Gastrocnemius medialis (tissue), 4 donors: ENCODE measurements at regions of chr1 and their contacts with region 1.

Region 1: GRCh38 chr1:99707535-99708142 is 58.8 kb downstream of the FRRS1 start:
- DNase-seq: peak; percentile 38 to 61
- ATAC-seq: peak; percentile 81
- H3K4me3 ChIP-seq: no peak overlapping the region
- H3K27ac ChIP-seq: no peak overlapping the region
- H3K4me1 ChIP-seq: peaks cover 0 to 3% of the 10 kb centered on the region in 2 donors
- H3K27me3 ChIP-seq: no peaks in the 10 kb centered on the region
- CTCF ChIP-seq: peak; percentile 81 to 95 (median 87)
- POLR2A ChIP-seq: no peak

Region 2: GRCh38 chr1:99170516-99170915 is 537.1 kb before region 1 on chr1:
- in situ Hi-C with region 1: loop called in 3 of 4 experiments (anchors 5 to 10 kb)
- intact Hi-C with region 1: no loop called
- DNase-seq: no peak
- ATAC-seq: no peak
- H3K4me3 ChIP-seq: no peak overlapping the region
- H3K27ac ChIP-seq: no peak overlapping the region
- H3K4me1 ChIP-seq: no peaks in the 10 kb centered on the region
- H3K27me3 ChIP-seq: no peaks in the 10 kb centered on the region
- CTCF ChIP-seq: no peak
- POLR2A ChIP-seq: no peak

Region 3: DNA sequence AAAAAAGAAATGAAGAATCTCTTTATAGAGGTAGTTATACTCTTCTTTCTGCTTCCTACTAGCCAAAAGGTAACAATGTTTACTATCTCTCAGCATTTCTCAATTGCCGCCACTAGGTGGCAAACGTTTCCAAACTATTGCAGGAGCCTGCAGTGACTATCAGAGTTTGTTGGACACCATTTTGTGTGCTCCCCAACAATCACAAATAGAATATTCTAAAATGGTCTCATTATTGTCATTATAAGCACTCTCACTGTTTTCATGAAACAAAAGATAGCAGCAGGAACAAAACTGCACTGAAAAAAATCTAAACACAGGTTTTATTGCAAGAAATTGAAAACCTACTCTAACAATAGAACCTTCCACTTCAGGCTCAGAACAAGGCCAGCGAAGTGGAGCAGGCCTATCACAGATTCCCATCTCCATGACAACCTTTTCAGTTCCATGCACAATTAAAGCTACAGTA is 527.3 kb before region 1 on chr1:
- in situ Hi-C with region 1: loop called (anchors 5 to 10 kb)
- intact Hi-C with region 1: loop called (anchors 1 kb)
- DNase-seq: peak; percentile 43 to 56
- ATAC-seq: peak; percentile 91 to 97
- H3K4me3 ChIP-seq: no peak overlapping the region
- H3K27ac ChIP-seq: peak overlapping the region in 1 of 4 donors; percentile 28
- H3K4me1 ChIP-seq: peaks cover 0 to 8% of the 10 kb centered on the region in 2 donors
- H3K27me3 ChIP-seq: no peaks in the 10 kb centered on the region
- CTCF ChIP-seq: peak; percentile 74 to 81 (median 76)
- POLR2A ChIP-seq: no peak

Region 4: DNA sequence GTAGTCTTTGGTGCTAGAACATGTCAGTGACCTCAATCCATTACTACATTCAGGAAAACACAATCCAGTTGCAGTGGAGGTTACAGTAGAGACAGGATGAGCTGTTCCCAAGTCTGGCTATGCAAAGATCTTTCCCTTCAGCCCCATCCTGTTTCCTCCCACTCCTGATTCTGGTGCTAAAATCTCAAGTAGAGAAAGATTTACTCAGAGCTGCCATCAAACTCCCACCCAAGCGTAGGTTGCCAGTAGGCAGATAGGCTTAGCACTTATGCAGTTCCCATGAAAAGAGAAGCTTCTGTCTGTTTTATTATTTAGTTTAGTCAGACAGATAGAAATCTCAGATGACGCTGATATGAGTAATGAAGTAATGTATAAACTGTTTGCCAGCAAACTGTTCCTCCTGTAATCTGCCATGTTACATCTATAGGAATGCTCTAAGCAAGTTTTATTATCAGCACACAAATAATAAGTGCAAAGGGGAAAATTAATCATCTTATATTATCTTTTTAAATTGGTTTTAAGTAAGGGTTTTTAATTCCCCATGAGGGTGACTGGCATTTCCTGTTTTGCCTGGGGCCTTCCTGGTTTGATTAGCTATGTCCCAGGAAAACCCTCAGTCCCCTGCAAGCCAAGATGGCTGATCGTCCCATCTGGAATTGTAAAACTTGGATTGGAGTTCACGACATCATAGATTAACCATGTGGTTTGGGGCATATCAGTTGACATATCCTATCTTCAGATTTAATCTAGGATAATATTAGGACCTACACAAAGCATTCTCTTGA is 250.1 kb before region 1 on chr1:
- in situ Hi-C with region 1: loop called in 2 of 4 experiments (anchors 25 kb)
- intact Hi-C with region 1: no loop called
- DNase-seq: no peak
- ATAC-seq: no peak
- H3K4me3 ChIP-seq: no peak overlapping the region
- H3K27ac ChIP-seq: no peak overlapping the region
- H3K4me1 ChIP-seq: no peaks in the 10 kb centered on the region
- H3K27me3 ChIP-seq: no peaks in the 10 kb centered on the region
- CTCF ChIP-seq: no peak
- POLR2A ChIP-seq: no peak

Region 5: DNA sequence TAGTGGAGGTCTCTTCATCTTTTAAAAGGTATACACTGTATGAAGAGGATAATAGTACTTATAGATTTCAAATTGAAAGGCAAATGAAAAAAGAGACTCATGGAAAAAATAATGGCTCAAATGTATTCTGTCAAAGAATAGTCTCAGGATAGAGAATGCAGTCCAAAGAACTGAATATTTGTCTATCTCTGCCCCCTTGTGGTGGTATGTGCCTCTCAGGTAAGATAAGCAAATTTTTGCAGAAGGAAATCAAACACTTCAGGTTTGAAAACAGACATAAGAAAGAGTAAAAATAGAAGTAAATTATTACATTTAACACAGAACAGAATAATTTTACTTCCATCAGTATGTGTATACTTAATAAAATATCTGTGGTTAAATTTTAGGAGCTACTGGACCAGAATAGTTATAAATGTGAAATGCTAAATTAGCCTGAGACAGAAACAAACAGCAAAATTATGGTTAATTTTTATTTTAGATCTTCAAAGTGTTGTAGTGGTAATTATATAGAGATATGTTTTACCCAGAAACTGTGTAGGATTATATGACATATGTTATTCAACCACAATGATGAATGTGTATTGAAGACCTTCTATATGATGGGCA is 226.1 kb before region 1 on chr1:
- in situ Hi-C with region 1: no loop called
- intact Hi-C with region 1: loop called (anchors 5 kb)
- DNase-seq: peak in 1 of 2 donors; percentile 12
- ATAC-seq: peak; percentile 66 to 71
- H3K4me3 ChIP-seq: no peak overlapping the region
- H3K27ac ChIP-seq: no peak overlapping the region
- H3K4me1 ChIP-seq: no peaks in the 10 kb centered on the region
- H3K27me3 ChIP-seq: no peaks in the 10 kb centered on the region
- CTCF ChIP-seq: peak; percentile 50 to 72 (median 69)
- POLR2A ChIP-seq: no peak

Region 6: GRCh38 chr1:99526926-99527477 is 180.6 kb before region 1 on chr1:
- in situ Hi-C with region 1: no loop called
- intact Hi-C with region 1: loop called (anchors 10 kb)
- DNase-seq: no peak
- ATAC-seq: no peak
- H3K4me3 ChIP-seq: no peak overlapping the region
- H3K27ac ChIP-seq: no peak overlapping the region
- H3K4me1 ChIP-seq: peaks cover 0 to 7% of the 10 kb centered on the region in 2 donors
- H3K27me3 ChIP-seq: no peaks in the 10 kb centered on the region
- CTCF ChIP-seq: peak in 1 of 5 experiments; percentile 12
- POLR2A ChIP-seq: no peak

Region 7: GRCh38 chr1:99829269-99829668 is 121.6 kb after region 1 on chr1:
- in situ Hi-C with region 1: no loop called
- intact Hi-C with region 1: no loop called
- DNase-seq: no peak
- ATAC-seq: no peak
- H3K4me3 ChIP-seq: no peak overlapping the region
- H3K27ac ChIP-seq: no peak overlapping the region
- H3K4me1 ChIP-seq: peaks cover 0 to 7% of the 10 kb centered on the region in 2 donors
- H3K27me3 ChIP-seq: no peaks in the 10 kb centered on the region
- CTCF ChIP-seq: no peak
- POLR2A ChIP-seq: no peak